Sigmoid colon (tissue), 7 donors: ENCODE measurements at regions of chr2 and their contacts with region 1.

Region 1: DNA sequence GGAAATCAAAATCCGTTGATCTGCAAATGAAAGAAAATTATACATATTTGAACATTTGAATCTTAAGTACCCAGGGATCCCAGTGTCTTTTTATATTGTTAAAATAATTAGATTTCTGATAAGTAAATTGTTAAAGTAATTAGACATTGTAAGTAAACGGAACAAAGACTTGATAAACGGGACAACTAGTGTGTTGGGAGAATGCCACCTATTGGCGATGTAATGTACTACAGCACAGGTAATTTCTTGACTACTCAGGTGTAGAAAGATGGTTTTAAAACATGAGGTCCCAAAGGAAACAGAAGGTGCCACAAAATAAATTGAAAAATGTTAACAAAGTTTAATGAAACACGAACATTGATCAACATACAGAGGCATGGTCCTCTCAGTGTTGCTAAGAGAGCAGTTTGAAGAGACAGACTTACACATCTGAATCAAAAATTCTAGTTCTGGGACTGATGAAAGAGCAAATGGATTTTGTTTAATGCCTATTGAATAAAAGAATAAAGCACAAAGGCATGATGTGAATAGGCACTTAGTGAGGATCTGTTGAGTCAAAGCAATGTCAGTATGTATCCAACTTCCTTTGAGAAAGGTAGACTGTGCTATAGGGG is 103.4 kb upstream of the RASGRP3 start:
- DNase-seq: no peak
- H3K4me3 ChIP-seq: no peak overlapping the region
- H3K27ac ChIP-seq: no peak overlapping the region
- H3K4me1 ChIP-seq: no peaks in the 10 kb centered on the region
- H3K27me3 ChIP-seq: no peaks in the 10 kb centered on the region
- CTCF ChIP-seq: peak; percentile 51 to 77 (median 65)
- EP300 ChIP-seq: no peak
- POLR2A ChIP-seq: no peak

Region 2: DNA sequence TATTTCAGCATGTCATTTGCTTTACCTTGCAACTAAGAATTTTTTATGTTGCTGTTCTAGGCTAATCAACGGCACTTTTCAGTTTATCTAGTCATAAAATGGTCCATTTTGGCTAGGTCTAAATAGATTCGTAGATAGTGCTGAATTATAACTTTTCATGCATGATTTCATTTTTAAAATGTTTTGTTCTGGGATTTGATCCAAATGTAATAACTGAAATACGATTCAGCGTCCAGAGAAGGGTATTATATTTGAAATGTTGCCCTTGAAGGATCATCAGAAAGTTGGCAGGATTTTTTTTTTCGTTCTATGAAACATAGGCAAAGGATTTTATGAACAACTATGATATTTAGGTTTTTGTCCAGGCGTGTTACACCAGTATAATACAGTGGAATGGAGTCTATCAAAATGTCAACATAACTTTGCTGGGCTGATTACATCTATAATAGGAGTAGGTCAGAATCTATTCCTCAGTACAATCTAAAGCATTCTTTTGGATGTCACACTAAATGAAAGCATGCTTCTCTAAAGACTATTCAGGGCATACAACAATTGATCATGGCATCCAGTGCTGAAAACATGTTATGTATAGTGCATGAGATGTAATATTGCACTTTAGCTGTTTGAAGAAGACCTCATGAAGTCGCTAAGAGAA is 720.4 kb before region 1 on chr2:
- intact Hi-C with region 1: no loop called
- DNase-seq: no peak
- H3K4me3 ChIP-seq: no peak overlapping the region
- H3K27ac ChIP-seq: no peak overlapping the region
- H3K4me1 ChIP-seq: peaks cover 0 to 10% (median 2%) of the 10 kb centered on the region in 4 donors
- H3K27me3 ChIP-seq: no peaks in the 10 kb centered on the region
- CTCF ChIP-seq: no peak
- EP300 ChIP-seq: no peak
- POLR2A ChIP-seq: no peak

Region 3: GRCh38 chr2:32772638-32773447 is 600.2 kb before region 1 on chr2:
- intact Hi-C with region 1: loop called (anchors 10 kb)
- DNase-seq: no peak
- H3K4me3 ChIP-seq: no peak overlapping the region
- H3K27ac ChIP-seq: no peak overlapping the region
- H3K4me1 ChIP-seq: peaks cover 0 to 3% (median 0%) of the 10 kb centered on the region in 4 donors
- H3K27me3 ChIP-seq: no peaks in the 10 kb centered on the region
- CTCF ChIP-seq: peak in 3 of 4 experiments; percentile 53 to 66 (median 53)
- EP300 ChIP-seq: no peak
- POLR2A ChIP-seq: no peak